ENCODE measurements at regions of chr21 and their contacts with region 1.

Region 1: DNA sequence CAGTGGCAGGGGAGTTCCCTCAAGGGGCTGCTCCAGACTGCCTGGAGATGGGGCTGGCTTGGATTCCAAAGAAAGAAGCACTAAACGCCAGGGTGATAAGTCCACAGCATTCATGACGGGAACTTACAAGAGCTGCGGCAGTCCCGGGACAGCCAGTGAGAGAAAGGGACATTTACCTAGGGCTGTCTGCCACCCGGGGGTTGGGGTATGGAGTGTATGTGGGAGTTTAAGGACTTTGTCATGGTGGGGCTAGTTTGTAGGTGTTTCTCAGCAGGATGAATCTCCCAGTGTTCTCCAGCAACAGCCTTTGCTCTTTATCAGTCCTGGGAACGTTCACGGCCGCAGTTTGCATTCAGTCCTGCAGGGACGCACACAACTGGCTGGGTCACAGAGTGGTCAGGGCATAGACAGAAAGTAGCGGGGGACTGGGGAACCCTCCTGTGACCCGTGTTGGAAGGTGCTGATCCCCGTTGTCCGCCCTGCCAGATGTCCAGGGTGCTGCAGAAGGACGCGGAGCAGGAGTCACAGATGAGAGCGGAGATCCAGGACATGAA is 41.4 kb upstream of the HMGN1 start:
- DNase-seq: no peak
- ATAC-seq: no peak
- H3K4me3 ChIP-seq: no peak overlapping the region
- H3K4me1 ChIP-seq: no peaks in the 10 kb centered on the region
- CTCF ChIP-seq: no peak

Region 2: DNA sequence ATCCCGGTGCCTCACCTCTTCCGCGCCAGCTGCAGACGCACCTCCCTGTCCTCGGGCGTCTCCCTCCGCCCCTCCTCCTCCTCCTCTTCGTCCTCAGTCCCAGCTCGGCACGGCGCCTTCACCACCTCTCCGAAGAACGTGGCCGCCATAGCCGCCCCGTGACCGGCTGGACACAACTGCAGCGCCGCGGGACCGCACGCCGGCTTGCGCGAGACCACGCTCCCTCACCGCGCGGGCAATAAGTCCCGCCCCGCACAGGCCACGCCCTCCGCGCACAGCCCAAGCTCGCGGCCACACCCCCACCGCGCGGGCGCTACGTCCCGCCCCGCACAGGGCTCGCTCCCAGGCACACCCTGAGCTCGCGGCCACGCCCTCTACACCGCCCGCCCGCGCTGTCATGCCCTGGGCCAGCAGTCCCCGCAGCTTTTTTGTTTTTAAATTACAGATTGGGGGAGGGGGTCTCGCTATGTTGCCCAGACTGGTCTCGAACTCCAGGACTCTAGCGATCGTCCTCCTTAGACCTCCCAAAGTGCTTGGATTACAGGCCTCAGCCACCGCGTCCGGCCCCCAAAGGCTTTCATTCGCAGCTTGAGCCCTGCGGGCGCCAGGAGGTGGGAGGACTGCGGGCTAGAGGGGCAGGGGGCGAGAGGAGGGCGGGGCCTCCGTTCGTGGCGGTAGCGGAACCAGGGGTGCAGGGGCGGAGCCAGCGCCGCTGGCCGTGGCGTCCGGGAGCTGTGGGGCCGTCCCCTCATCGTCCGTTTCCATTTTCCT is 206.9 kb before region 1 on chr21 and contains the start of gene PSMG1:
- intact Hi-C with region 1: no loop called
- DNase-seq: peak; percentile 97 to 98 (median 98)
- ATAC-seq: peak; percentile 95
- H3K4me3 ChIP-seq: peak within 1 kb of the TSS; percentile 40
- H3K4me1 ChIP-seq: peaks cover 17% of the 10 kb centered on the region
- CTCF ChIP-seq: no peak
- total RNA-seq, gene PSMG1: 24.3 to 48.1 (median 36.2) TPM

Region 3: GRCh38 chr21:39251326-39251725 is 139.0 kb before region 1 on chr21:
- intact Hi-C with region 1: loop called in 1 of 2 experiments (anchors 10 kb)
- DNase-seq: no peak
- ATAC-seq: no peak
- H3K4me3 ChIP-seq: no peak overlapping the region
- H3K4me1 ChIP-seq: peaks cover 3% of the 10 kb centered on the region
- CTCF ChIP-seq: no peak

Measured in mucosa of descending colon (tissue), 3 donors.